ENCODE measurements at regions of chr20 and their contacts with region 1.

Region 1: GRCh38 chr20:51562332-51563155 is 20.0 kb upstream of the NFATC2 start:
- DNase-seq: peak; percentile 83 to 91 (median 86)
- ATAC-seq: peak; percentile 69 to 89 (median 76)
- H3K4me3 ChIP-seq: peak overlapping the region; percentile 7 to 66 (median 56)
- H3K27ac ChIP-seq: peak overlapping the region; percentile 13 to 90 (median 82)
- H3K4me1 ChIP-seq: peaks cover 4 to 54% (median 39%) of the 10 kb centered on the region in 12 donors
- H3K27me3 ChIP-seq: peaks cover 0 to 43% (median 0%) of the 10 kb centered on the region in 9 donors
- CTCF ChIP-seq: peak in 7 of 12 donors; percentile 4 to 54 (median 22)
- POLR2A ChIP-seq: no peak

Region 2: GRCh38 chr20:51385646-51386530 is 176.7 kb before region 1 on chr20:
- intact Hi-C with region 1: loop called in 1 of 10 experiments (anchors 5 kb)
- DNase-seq: no peak
- ATAC-seq: peak; percentile 37 to 58 (median 46)
- H3K4me3 ChIP-seq: no peak overlapping the region
- H3K27ac ChIP-seq: no peak overlapping the region
- H3K4me1 ChIP-seq: peaks cover 0 to 49% (median 16%) of the 10 kb centered on the region in 12 donors
- H3K27me3 ChIP-seq: no peaks in the 10 kb centered on the region
- CTCF ChIP-seq: peak; percentile 25 to 68 (median 55)
- POLR2A ChIP-seq: no peak

Region 3: DNA sequence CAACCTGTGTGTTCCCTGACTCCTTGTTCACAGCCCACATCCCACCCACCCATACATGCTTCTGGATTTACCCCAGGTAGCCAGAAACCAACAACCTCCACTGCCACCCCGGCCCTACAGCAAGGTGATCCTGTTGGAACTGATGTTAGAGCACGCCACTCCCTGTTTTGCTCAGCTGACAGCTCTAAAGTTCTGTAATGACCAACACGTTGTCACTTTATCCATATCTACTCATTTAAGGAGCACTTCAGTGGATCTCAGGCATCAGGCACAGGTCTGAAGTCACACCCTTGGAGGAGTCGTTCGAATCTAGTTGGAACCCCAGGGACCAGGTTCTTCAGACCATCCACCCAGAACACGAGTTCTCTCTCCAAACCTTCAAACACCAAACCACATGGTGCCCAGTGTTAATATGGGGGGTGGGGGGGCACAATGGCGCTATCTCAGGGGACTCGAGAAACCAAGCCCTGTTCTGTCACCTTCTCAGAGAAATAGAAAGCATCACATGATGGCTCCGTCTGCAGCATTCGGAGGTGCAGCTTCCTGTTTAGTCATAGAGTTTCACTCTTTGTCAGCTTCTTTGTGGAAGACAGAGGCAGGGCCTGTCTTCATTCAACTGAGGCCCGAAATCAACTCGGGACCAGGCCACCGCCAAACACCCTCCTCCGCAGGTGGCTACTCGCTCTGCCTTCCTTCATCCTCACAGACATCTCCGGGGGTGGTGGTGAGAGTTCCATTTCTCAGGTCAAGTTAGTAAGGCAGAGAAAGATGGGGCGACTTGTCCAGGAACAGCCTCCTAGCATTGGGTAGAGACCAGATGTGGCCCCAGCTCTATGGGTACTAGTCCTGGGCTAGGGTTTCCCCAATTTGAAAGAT is 162.3 kb before region 1 on chr20:
- intact Hi-C with region 1: no loop called
- DNase-seq: no peak
- ATAC-seq: peak in 1 of 4 donors; percentile 43
- H3K4me3 ChIP-seq: no peak overlapping the region
- H3K27ac ChIP-seq: peak overlapping the region in 2 of 12 donors; percentile 9 to 86
- H3K4me1 ChIP-seq: peaks cover 0 to 47% (median 8%) of the 10 kb centered on the region in 12 donors
- H3K27me3 ChIP-seq: no peaks in the 10 kb centered on the region
- CTCF ChIP-seq: no peak
- POLR2A ChIP-seq: no peak

Region 4: GRCh38 chr20:51447097-51447771 is 115.3 kb before region 1 on chr20:
- intact Hi-C with region 1: loop called in 4 of 10 experiments (anchors 10 kb)
- DNase-seq: peak; percentile 60 to 74 (median 62)
- ATAC-seq: peak in 3 of 4 donors; percentile 7 to 71 (median 45)
- H3K4me3 ChIP-seq: no peak overlapping the region
- H3K27ac ChIP-seq: peak overlapping the region in 4 of 12 donors; percentile 1 to 59 (median 28)
- H3K4me1 ChIP-seq: peaks cover 5 to 49% (median 36%) of the 10 kb centered on the region in 12 donors
- H3K27me3 ChIP-seq: no peaks in the 10 kb centered on the region
- CTCF ChIP-seq: no peak
- POLR2A ChIP-seq: no peak

Region 5: GRCh38 chr20:51456511-51457509 is 105.7 kb before region 1 on chr20:
- intact Hi-C with region 1: loop called in 4 of 10 experiments (anchors 5 to 10 kb)
- DNase-seq: peak; percentile 94 to 97 (median 96)
- ATAC-seq: peak; percentile 97 to 99 (median 98)
- H3K4me3 ChIP-seq: peak overlapping the region in 4 of 12 donors; percentile 3 to 19 (median 10)
- H3K27ac ChIP-seq: peak overlapping the region in 11 of 12 donors; percentile 12 to 82 (median 61)
- H3K4me1 ChIP-seq: peaks cover 2 to 18% (median 14%) of the 10 kb centered on the region in 12 donors
- H3K27me3 ChIP-seq: no peaks in the 10 kb centered on the region
- CTCF ChIP-seq: peak in 1 of 12 donors; percentile 15
- POLR2A ChIP-seq: no peak

Region 6: DNA sequence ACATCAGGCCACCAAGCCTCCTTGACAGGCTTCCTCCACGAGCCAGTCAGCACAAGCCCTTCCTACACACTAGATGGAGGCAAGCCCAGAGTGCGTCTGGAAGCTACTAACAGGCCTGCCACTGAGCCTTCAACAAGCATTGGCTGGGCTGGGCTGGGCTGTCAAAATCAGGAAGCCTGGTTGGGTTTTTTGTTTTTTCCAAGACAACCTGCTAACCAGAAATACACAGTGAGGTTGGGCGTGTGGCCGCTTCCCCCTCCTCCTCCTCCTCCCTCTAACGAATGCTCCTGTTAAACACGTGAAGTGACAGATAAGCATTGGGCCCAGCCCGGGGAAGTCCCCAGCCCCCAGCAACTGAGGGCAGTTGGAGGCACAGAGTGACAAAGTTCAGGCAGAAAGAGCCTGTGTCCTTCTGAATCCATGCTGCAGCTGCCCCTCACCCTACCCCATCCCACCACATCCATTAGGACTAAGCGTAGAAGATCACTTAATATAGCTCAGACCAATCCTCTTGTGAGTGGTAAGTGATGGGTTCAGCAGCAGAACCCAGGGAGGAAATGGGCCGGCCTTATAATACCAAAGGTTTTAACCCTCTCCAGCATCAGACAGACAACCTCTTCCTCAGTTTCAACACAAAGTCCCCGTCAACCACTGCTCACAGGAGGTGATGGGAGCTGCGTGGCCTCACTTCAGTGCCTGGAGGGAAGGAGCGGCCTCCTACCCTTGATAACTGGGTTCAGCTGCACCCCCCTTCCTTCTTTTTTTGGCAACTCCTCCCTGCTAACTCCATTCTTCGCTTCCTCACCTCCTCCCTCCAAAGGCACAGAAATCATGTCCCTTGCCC is 21.1 kb before region 1 on chr20:
- intact Hi-C with region 1: loop called in 1 of 10 experiments (anchors 2 kb)
- DNase-seq: peak; percentile 82 to 92 (median 87)
- ATAC-seq: peak; percentile 92 to 95 (median 92)
- H3K4me3 ChIP-seq: peak overlapping the region in 10 of 12 donors; percentile 35 to 69 (median 54)
- H3K27ac ChIP-seq: peak overlapping the region; percentile 57 to 89 (median 78)
- H3K4me1 ChIP-seq: peaks cover 4 to 44% (median 34%) of the 10 kb centered on the region in 12 donors
- H3K27me3 ChIP-seq: peaks cover 0 to 10% (median 0%) of the 10 kb centered on the region in 9 donors
- CTCF ChIP-seq: peak in 1 of 12 donors; percentile 30
- POLR2A ChIP-seq: no peak

Region 7: GRCh38 chr20:51595058-51595532 is 32.6 kb after region 1 on chr20:
- intact Hi-C with region 1: loop called in 1 of 10 experiments (anchors 2 kb)
- DNase-seq: peak; percentile 86 to 92 (median 89)
- ATAC-seq: peak; percentile 96 to 99 (median 97)
- H3K4me3 ChIP-seq: peak overlapping the region in 1 of 12 donors; percentile 17
- H3K27ac ChIP-seq: peak overlapping the region in 2 of 12 donors; percentile 1 to 7
- H3K4me1 ChIP-seq: peaks cover 0 to 14% (median 4%) of the 10 kb centered on the region in 12 donors
- H3K27me3 ChIP-seq: no peaks in the 10 kb centered on the region
- CTCF ChIP-seq: peak; percentile 81 to 92 (median 87)
- POLR2A ChIP-seq: no peak